ENCODE measurements at regions of chr3 and their contacts with region 1.

Region 1: GRCh38 chr3:14335774-14336756 is 66.3 kb upstream of the SLC6A6 start:
- DNase-seq: peak; percentile 78 to 97
- H3K4me3 ChIP-seq: no peak overlapping the region
- H3K27ac ChIP-seq: peak overlapping the region; percentile 62
- H3K4me1 ChIP-seq: peaks cover 35% of the 10 kb centered on the region
- H3K27me3 ChIP-seq: no peaks in the 10 kb centered on the region
- CTCF ChIP-seq: no peak; the same call in 1 of the 2 replicates

Region 2: GRCh38 chr3:14240366-14240765 is 95.7 kb before region 1 on chr3:
- CTCF ChIA-PET with region 1: no interaction called
- POLR2A ChIA-PET with region 1: interaction called, 18 read pairs
- intact Hi-C with region 1: no loop called
- DNase-seq: no peak
- H3K4me3 ChIP-seq: no peak overlapping the region
- H3K27ac ChIP-seq: no peak overlapping the region
- H3K4me1 ChIP-seq: peaks cover 26% of the 10 kb centered on the region
- H3K27me3 ChIP-seq: no peaks in the 10 kb centered on the region
- CTCF ChIP-seq: no peak

Region 3: DNA sequence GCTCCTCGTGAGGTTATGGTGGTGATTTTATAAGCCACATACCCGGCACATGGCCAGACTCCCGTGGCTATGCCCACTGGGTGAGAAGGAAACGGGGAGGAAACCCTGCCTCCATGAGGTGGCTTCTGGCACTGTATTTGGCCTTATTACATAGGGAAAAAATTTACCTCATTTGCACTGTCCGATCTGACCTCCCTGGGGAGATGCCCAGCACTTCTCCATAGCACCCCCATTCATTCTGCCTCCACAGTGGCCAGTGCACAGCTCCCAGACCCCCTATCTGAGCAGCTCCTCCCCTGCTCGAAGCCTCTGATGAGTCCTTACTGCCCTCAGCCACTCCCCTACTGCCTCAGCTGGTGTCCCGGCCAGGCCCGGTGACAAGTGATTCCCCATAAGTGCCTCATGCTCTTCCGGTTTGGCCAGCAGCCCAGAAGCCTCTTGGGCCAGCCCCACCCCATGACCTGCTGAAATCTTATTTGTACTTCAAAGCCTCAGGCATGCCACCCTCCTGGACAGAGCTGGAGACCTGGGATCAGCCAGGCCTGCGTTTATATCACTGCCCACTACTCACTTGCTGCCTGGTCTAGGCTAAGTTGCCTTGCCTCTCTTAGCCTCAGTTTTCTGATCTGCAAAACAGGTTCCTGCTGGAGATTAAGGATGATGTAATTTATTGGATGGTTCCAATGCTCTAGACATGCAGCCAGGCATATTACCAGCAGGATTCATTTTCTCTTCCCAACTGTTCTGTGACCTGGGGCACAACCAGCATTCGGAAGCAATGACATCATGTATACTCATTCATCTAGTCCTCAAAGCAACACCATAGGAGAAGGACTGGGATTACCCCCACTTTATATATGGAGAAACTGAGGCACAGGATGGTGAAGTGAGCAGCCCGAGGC is 35.8 kb after region 1 on chr3:
- CTCF ChIA-PET with region 1: no interaction called
- POLR2A ChIA-PET with region 1: no interaction called
- intact Hi-C with region 1: loop called (anchors 5 kb)
- DNase-seq: peak; percentile 90 to 93
- H3K4me3 ChIP-seq: no peak overlapping the region
- H3K27ac ChIP-seq: peak overlapping the region; percentile 62
- H3K4me1 ChIP-seq: peaks cover 54% of the 10 kb centered on the region
- H3K27me3 ChIP-seq: no peaks in the 10 kb centered on the region
- CTCF ChIP-seq: no peak; the same call in 1 of the 2 replicates

Region 4: GRCh38 chr3:14672588-14672987 is 336.5 kb after region 1 on chr3:
- CTCF ChIA-PET with region 1: no interaction called
- POLR2A ChIA-PET with region 1: no interaction called
- intact Hi-C with region 1: no loop called
- DNase-seq: no peak
- H3K4me3 ChIP-seq: no peak overlapping the region
- H3K27ac ChIP-seq: no peak overlapping the region
- H3K4me1 ChIP-seq: no peaks in the 10 kb centered on the region
- H3K27me3 ChIP-seq: no peaks in the 10 kb centered on the region
- CTCF ChIP-seq: no peak

Measured in PC-9 (cell line).